Activated T-helper 1 cell treated with anti-CD3 and anti-CD28 coated beads, Interleukin-12 subunit alpha, Interleukin-12 subunit beta, Interleukin-2, Interleukin-4 antibody, amounts not matched to agents 30 ng/mL and 10 ng/mL and 1 ng/mL, durations not matched to agents 14 hours and 24 hours and 36 hours (primary cell): ENCODE measurements at regions of chr6 and their contacts with region 1.

Region 1: GRCh38 chr6:13454286-13455221 is 32.8 kb downstream of the GFOD1 start:
- DNase-seq: peak; percentile 55
- H3K4me3 Mint-ChIP-seq: peak overlapping the region; percentile 27
- H3K27ac Mint-ChIP-seq: peak overlapping the region; percentile 88
- H3K4me1 Mint-ChIP-seq: peaks cover 55% of the 10 kb centered on the region
- H3K27me3 Mint-ChIP-seq: peaks cover 1% of the 10 kb centered on the region

Region 2: DNA sequence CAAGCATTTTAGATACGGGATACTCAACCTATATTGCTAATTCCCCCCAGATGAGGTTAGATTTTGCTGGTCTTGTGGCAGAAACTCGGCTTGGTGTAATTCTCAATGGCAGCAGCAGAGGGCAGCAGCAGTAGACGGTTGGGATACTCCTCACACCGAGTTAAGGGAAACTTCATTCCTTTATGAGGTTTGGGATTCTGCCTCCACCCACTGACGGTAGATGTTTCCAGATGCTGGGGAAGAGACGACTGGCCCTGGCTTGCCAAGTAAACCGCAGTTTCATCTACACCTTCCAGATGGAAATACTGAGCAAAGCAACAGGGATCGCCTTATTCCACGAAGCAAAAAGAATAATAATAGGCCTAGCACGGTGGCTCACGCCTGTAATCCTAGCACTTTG is 118.0 kb before region 1 on chr6:
- intact Hi-C with region 1: loop called (anchors 2 kb)
- DNase-seq: peak; percentile 60
- H3K4me3 Mint-ChIP-seq: no peak overlapping the region
- H3K27ac Mint-ChIP-seq: no peak overlapping the region
- H3K4me1 Mint-ChIP-seq: peaks cover 43% of the 10 kb centered on the region
- H3K27me3 Mint-ChIP-seq: peaks cover 9% of the 10 kb centered on the region

Region 3: DNA sequence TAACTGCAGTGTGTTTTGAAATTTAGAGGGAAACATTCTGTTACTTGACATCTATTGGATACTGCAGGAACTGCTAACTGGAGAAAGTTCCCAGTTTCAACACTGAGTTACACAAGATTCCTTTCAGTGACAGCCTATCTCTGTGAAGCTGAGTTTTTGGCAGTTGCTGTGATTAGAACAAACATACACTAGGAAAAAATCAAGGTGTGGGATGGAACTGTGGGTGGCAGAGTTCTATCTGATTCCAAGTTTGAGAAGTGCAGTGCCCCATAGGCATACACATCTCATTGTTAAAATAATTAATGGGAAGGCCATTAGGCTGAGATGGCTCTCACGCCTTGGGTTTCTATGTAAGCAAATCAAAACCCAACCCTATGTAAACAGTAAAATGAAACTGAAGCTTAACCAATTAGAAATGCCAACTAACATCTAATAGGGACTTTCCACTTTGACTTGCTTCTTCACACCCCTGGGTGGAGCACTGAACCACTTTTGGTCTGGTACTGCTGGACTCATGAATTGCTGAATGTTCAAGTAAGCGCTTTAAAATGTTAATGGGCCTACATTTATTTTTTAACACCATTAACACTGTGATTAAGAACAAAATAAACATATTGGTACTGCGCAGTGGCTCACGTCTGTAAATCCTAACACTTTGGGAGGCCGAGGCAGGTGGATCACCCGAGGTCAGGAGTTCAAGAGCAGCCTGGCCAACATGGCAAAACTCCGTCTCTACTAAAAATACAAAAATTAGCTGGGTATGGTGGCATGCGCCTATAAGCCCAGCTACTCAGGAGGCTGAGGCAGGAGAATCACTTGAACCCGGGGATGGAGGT is 71.0 kb before region 1 on chr6:
- intact Hi-C with region 1: loop called (anchors 2 kb)
- DNase-seq: peak; percentile 17
- H3K4me3 Mint-ChIP-seq: no peak overlapping the region
- H3K27ac Mint-ChIP-seq: peak overlapping the region; percentile 18
- H3K4me1 Mint-ChIP-seq: peaks cover 38% of the 10 kb centered on the region
- H3K27me3 Mint-ChIP-seq: no peaks in the 10 kb centered on the region

Region 4: GRCh38 chr6:13487122-13488014 is 32.8 kb after region 1 on chr6 and contains the start of gene GFOD1:
- intact Hi-C with region 1: loop called (anchors 1 kb)
- DNase-seq: peak; percentile 80
- H3K4me3 Mint-ChIP-seq: peak within 1 kb of the TSS; percentile 89
- H3K27ac Mint-ChIP-seq: peak within 1 kb of the TSS; percentile 72
- H3K4me1 Mint-ChIP-seq: peaks cover 39% of the 10 kb centered on the region
- H3K27me3 Mint-ChIP-seq: peaks cover 10% of the 10 kb centered on the region
- total RNA-seq, gene GFOD1: 12.4 and 13.6 TPM in 2 replicates

Region 5: GRCh38 chr6:13668291-13668928 is 213.9 kb after region 1 on chr6:
- intact Hi-C with region 1: loop called (anchors 1 kb)
- DNase-seq: no peak
- H3K4me3 Mint-ChIP-seq: no peak overlapping the region
- H3K27ac Mint-ChIP-seq: peak overlapping the region; percentile 77
- H3K4me1 Mint-ChIP-seq: peaks cover 83% of the 10 kb centered on the region
- H3K27me3 Mint-ChIP-seq: no peaks in the 10 kb centered on the region

Region 6: DNA sequence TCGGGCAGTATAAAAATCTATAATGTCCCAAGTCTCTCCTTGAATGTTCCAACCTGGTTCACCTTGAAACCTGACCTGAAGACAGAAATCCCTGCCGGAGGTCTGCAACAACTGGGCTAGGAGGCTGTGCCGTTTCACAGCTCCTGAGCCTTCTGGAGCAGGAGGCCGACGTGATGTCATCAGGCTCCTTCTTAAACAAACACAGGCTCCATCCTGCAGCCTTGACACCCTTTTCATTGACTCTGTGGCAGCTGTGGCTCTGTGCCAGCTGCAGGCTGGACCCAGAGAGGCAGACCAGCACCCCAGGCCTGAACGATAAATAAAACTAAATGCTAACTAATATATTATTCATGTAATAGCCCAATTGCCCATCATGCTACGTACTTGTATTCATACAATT is 1146.9 kb after region 1 on chr6:
- intact Hi-C with region 1: no loop called
- DNase-seq: no peak
- H3K4me3 Mint-ChIP-seq: no peak overlapping the region
- H3K27ac Mint-ChIP-seq: no peak overlapping the region
- H3K4me1 Mint-ChIP-seq: peaks cover under 1% of the 10 kb centered on the region
- H3K27me3 Mint-ChIP-seq: peaks cover 6% of the 10 kb centered on the region